ENCODE measurements at regions of chr17 and their contacts with region 1.

Region 1: GRCh38 chr17:81222906-81223761 is at the start of gene CEP131:
- DNase-seq: peak; percentile 98
- H3K4me3 ChIP-seq: peak within 1 kb of the TSS; percentile 64 to 94 (median 85)
- H3K27ac ChIP-seq: no peak within 1 kb of the TSS
- H3K4me1 ChIP-seq: peaks cover 14% of the 10 kb centered on the region
- H3K27me3 ChIP-seq: no peaks in the 10 kb centered on the region
- CTCF ChIP-seq: no peak
- POLR2A ChIP-seq: peak; percentile 62
- total RNA-seq, gene CEP131: 17.9 and 19.7 TPM in 2 replicates

Region 2: GRCh38 chr17:81119223-81120148 is 103.6 kb before region 1 on chr17:
- CTCF ChIA-PET with region 1: no interaction called
- POLR2A ChIA-PET with region 1: no interaction called
- dilution Hi-C with region 1: no loop called
- intact Hi-C with region 1: loop called (anchors 1 kb)
- DNase-seq: peak; percentile 92
- H3K4me3 ChIP-seq: peak overlapping the region in 2 of 3 experiments; percentile 10 to 36
- H3K27ac ChIP-seq: no peak overlapping the region
- H3K4me1 ChIP-seq: peaks cover 7% of the 10 kb centered on the region
- H3K27me3 ChIP-seq: peaks cover 9 to 15% of the 10 kb centered on the region in 2 experiments
- CTCF ChIP-seq: peak in 1 of 2 donors; percentile 24
- POLR2A ChIP-seq: no peak

Region 3: DNA sequence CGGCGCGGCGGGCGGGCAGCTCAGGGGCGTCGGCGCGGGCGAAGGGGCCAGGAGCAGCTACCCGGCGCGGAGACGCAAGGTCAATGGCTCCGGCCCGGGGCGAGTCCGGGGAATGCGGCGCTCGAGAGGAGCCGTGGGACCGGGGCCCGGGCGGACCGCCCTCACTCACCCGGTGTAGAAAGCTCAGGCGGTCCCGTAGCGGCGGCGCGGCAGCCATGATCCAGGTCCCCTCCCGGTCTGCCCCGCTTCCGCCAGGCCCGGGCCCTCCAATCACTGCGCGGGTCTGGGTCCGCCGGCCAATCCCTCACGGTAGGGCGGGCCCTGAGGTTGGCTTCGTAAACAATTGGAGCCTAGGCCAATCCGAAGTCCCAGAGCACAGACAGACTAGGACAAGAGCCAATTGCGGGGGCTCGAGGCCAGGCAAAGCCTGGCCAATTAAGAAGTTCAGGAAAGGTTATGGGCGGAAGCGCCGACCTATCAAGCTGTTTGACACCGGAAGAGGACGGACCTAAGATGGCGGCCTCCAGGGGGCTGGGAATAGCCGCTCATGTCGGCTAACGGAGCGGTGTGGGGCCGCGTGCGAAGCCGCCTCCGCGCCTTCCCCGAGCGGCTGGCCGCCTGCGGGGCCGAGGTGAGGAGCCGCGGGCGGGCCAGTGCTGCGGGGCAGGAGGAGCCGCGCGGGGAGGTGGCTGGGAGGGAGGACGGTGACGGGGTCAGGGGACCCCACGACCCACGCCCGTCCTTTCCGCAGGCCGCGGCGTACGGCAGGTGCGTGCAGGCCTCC is 15.9 kb after region 1 on chr17 and contains the starts of genes NDUFAF8 and TEPSIN:
- CTCF ChIA-PET with region 1: interaction called, 7 read pairs
- POLR2A ChIA-PET with region 1: interaction called, 4 read pairs
- dilution Hi-C with region 1: no loop called
- intact Hi-C with region 1: loop called (anchors 1 kb)
- DNase-seq: peak; percentile 100
- H3K4me3 ChIP-seq: peak within 1 kb of the TSS; percentile 78 to 86 (median 84)
- H3K27ac ChIP-seq: peak within 1 kb of the TSS; percentile 58
- H3K4me1 ChIP-seq: peaks cover 6% of the 10 kb centered on the region
- H3K27me3 ChIP-seq: no peaks in the 10 kb centered on the region
- CTCF ChIP-seq: no peak
- POLR2A ChIP-seq: peak; percentile 56
- total RNA-seq, gene NDUFAF8: 61.5 and 69.9 TPM in 2 replicates
- total RNA-seq, gene TEPSIN: 35.6 and 41.6 TPM in 2 replicates